ENCODE measurements at regions of chr20 and their contacts with region 1.

Region 1: DNA sequence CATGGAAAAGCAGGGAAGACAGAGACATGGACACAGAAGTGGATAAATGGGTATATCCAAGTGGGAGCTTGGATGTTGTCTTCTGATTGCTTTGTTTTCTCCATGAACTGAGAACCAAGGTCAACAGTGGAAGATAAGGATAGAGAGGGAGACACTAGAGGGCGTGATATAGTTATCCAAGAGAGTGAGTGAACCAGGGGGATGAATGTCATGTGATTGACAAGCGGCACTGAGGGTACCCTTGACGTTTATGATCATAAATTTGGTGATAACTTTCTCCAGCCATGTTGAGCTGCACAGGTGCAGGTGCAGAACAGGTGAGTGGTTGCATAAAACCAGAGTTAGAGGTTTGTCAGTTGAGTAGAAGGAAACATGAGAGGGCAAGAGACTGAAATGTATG is 20.7 kb downstream of the EBF4 start:
- H3K4me3 ChIP-seq: no peak overlapping the region
- H3K27ac ChIP-seq: no peak overlapping the region
- H3K4me1 ChIP-seq: no peaks in the 10 kb centered on the region
- CTCF ChIP-seq: peak; percentile 13; the same call in 1 of the 2 replicates

Region 2: DNA sequence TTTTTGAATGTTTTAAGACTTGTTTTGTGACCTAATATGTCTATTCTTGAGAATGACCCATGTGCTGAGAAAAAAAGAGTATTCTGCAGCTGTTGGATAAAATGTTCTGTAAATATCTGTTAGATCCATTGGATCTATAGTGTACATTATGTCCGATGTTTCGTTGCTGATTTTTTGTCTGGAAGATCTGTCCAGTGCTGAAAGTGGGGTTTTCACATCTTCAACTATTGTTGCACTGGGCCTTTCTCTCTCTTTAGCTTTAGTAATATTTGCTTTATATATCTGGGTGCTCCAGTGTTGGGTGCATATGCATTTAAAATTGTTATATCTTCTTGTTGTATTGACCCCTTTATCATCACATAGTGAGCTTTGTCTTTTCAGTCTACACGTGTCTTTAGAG is 1216.4 kb before region 1 on chr20:
- CTCF ChIA-PET with region 1: no interaction called
- POLR2A ChIA-PET with region 1: interaction called, 12 read pairs
- H3K4me3 ChIP-seq: no peak overlapping the region
- H3K27ac ChIP-seq: no peak overlapping the region
- H3K4me1 ChIP-seq: peaks cover 3% of the 10 kb centered on the region; the same call in 1 of the 2 replicates
- CTCF ChIP-seq: no peak